GM13977 (cell line): ENCODE measurements at regions of chr6 and their contacts with region 1.

Region 1: DNA sequence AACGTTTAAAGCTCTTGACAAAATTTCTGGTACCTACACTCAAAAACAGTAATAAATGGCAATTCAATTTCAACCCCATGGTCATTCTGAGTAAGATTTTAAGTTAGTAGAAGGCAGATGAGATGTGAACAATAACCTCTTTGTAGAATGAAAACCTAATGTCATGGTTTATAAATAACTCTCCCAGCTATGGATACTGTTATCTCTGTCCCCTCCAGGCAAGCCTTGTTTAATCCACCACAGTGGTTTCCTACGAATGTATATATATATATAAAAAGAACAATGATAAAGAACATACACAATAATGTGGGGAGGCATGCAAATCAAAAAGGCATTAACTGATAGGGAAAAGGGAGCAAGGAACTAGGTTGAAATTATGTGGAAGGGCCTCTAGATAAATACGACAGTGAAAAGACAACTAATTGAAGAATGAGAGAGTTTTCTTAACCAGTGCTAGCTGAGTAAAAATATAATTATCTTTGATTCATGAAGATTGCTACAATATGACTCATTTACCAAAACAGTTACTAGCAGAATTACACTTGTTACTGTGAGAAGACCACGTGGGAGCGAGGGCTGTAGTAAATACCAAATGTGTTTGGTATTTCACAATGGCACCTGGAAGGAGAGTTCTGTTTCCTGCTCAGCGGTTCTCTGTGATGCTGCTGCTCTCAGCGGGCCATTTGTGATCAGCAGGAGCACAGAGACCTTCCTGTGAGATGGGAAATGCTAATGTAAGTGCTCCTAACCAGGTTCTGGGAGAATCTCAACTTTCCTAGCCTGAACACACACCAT is 173.7 kb downstream of the MBOAT1 start:
- DNase-seq: no peak
- CTCF ChIP-seq: no peak

Region 2: DNA sequence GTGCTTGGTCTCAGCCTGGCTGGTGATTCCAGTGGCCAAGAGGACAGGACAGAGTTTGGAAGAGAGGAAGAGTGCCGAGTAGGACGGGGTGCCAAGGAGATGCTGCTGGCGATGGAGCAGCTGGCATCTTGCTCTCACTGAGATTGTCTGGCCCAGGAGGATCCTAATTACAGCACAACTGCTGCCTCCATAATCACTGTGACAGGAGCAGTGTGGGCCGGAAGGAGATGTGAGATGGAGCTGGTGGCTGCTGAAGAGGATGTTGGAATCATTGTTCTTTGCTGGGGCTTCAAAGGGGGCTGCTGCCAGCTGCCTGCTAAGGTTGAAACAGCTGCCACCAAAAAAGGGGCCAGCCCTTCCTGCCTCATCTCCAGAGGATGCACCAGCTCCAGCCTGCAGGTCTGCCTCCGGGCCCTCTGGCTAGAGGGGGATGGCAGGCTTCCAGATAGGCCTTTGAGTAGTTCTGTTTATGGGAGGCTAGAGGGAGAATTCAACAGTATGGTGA is 1437.0 kb before region 1 on chr6:
- in situ Hi-C with region 1: loop called (anchors 25 kb)
- DNase-seq: no peak
- CTCF ChIP-seq: no peak

Region 3: DNA sequence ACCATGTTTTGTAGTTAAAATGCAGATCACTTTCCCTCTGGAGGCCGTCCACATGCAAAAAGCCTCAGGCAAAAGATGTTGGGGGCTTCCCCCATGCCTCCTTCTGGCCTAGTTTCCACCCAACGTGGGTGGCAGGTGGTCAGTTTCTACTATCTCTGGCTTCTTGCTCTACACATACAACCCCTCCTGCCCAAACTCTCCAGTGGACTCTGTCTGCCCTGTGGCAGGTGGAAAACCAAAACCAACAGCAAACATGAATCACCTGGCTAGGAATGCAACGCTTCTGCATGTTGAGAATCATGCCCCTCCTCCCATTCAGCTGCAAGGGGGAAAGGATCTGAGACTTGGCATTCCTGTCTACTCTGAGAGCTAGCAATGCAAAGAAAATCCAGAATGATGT is 78.9 kb after region 1 on chr6:
- in situ Hi-C with region 1: no loop called
- DNase-seq: peak; percentile 26
- CTCF ChIP-seq: no peak